ENCODE measurements at regions of chr7 and their contacts with region 1.

Region 1: GRCh38 chr7:128827248-128827958 is 2.8 kb upstream of the FLNC start:
- H3K4me3 ChIP-seq: no peak overlapping the region
- H3K27ac ChIP-seq: no peak overlapping the region
- H3K4me1 ChIP-seq: no peaks in the 10 kb centered on the region
- CTCF ChIP-seq: no peak

Region 2: DNA sequence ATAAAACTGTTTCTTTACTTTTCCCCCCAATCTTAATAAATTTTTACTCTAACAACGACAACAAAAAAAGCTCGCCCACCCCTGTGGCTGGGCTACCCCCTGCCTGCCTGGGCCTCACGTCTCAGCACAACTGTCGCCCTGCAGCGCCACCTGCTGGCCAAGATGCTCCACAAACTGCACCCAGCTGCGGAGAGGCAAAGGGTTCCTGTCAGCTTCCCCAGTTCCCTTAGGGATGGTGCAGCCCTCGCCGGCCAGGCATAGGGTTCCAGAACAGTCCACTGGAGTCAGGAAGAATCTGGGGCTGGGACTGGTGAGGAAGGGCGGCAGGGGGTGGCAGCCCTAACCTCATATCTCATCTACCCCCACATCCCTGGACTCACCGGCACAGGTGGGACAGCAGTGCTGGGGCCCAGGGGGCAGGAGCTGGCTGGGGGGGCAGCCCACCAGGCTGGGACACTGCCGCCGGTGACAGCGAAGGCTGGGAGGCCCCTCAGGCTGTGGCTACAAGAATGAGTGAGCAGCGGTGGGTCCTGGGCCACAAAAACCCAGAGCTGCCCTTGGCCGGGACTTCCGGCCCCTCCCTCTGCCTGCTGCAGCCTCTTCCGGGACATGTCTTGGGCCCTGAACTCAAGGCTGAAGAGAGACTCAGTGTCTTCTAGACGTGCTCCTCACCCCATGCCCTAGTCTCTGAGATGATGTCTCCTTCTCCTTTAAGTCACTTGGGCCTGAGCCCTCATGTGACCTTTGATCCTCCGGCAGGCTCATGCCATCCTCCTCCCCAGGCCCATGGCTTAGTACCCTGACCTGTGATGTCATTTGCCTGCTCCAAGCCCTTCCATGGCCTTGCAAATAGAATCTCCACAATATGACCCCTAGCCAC is 56.5 kb after region 1 on chr7:
- CTCF ChIA-PET with region 1: interaction called, 10 read pairs
- POLR2A ChIA-PET with region 1: no interaction called
- H3K4me3 ChIP-seq: no peak overlapping the region
- H3K27ac ChIP-seq: no peak overlapping the region
- H3K4me1 ChIP-seq: no peaks in the 10 kb centered on the region
- CTCF ChIP-seq: peak; percentile 76

Region 3: DNA sequence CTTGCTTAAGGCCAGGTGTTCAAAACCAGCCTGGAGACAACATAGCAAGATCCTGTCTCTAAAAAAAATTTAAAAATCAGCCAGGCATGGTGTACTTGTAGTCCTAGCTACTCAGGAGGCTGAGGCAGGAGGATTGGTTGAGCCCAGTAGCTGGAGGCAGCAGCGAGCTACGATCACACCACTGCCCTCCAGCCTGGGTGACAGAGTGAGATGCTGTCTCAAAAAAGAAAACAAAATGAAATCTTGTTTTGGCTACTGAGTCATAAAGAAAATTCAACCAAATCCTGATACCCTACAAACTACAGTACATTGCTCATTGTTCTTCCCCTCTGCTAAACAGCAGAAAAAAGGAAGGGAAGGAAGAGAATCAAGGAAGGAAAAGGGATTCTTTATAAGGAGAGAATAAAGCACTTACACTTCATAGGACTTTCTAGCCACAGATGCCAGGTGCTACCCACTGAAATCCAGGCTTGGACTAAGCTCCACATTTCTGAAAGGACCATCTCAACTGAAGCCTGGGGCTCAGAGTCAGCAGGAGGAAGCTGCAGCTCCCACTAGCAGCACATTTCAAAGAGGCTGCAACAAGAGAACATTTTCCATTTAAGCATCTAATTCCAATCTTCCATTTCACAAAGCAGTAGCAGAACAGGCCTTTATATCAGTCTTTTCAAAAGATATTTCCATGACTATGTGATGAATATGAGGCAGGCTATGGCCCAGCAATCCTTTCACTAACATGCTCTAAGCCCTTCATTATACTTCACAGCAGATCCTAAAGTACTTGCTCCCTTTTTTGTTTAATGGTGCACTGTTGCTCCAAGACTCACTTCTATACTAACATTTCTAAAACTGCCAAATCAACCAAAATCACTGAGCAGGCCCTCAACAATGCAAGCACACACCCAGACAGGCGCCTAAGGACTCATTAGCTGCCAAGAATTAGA is 214.0 kb after region 1 on chr7:
- CTCF ChIA-PET with region 1: no interaction called
- POLR2A ChIA-PET with region 1: no interaction called
- H3K4me3 ChIP-seq: no peak overlapping the region
- H3K27ac ChIP-seq: no peak overlapping the region
- H3K4me1 ChIP-seq: peaks cover 6% of the 10 kb centered on the region
- CTCF ChIP-seq: no peak

Measured in HEK293 (cell line).